ENCODE measurements at regions of chr9 and their contacts with region 1.

Region 1: DNA sequence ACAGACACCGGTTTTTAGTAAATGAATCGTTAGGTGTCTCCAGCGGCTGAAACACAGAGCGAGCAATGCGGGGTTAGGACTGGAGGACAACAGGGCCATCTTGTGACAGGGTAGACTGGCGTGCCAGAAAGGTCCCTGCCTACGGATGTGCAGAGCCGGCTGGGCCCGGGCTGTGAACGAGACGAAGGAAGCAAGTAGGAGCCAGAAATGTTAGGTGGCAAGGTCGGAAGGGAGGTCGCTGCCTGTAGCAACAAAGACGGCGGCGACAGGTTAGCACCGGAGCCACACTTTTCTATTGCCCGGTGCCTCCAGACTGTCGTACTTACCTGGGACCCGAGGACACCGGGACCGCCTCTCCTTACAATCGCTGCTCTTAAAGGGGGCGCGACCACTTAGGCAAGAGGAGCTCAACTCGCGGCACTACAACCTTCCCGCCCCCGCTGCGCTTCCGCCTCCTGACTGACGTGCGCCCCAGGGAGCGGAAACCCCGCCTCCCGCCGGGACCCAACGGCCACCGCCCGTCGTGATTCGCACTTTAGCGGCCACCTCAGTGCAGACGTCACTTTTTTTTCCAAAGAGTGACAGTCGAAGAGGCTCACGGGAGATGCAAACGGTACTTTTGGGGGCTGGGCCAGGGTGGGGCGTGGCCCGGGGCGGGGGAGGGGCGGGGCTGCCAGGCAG is at the start of gene INIP:
- DNase-seq: peak; percentile 95 to 96
- ATAC-seq: peak; percentile 98 to 100 (median 99)
- H3K4me3 ChIP-seq: peak within 1 kb of the TSS; percentile 52 to 97 (median 89)
- H3K27ac ChIP-seq: peak within 1 kb of the TSS; percentile 15 to 94 (median 90)
- H3K4me1 ChIP-seq: peaks cover 6 to 17% (median 11%) of the 10 kb centered on the region in 9 donors
- H3K27me3 ChIP-seq: no peaks in the 10 kb centered on the region
- CTCF ChIP-seq: peak in 3 of 9 donors; percentile 27 to 40 (median 38)
- total RNA-seq, gene INIP: 10.7 to 18.9 (median 13.0) TPM

Region 2: DNA sequence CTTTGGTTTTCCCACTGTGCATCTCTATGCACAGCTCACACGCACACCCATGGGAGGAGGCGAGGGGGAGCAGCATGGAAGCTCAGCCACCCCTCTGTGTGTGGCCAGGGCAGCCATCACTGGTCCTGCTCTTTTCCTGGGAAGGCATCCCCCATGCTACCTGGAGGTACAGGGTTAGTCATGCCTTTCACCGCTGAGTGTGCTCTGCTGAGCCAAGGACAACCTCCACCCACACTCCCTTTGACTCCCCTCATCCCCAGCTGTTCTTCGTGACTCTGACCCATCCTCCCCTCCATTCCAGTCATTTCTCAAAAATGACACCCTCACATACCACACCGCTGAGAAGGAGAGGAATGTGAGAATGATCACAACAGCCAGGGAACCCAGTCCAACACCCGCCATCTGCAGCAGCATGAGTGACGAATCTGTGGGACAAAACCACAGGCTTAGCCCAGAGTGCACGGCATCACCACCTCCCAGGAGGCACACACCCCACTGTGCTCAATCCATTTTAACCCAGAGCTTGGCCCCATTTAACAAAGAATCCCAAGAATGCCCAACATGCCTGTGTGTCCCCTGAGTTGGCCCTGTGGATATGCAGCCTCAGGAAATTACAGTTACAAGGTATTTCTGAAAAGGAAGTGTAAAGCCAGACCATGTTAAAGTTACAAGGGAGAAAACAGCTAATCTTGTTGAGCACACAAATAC is 676.1 kb before region 1 on chr9:
- intact Hi-C with region 1: no loop called
- DNase-seq: no peak
- ATAC-seq: peak in 7 of 8 donors; percentile 38 to 95 (median 83)
- H3K4me3 ChIP-seq: no peak overlapping the region
- H3K27ac ChIP-seq: peak overlapping the region in 3 of 10 donors; percentile 38 to 45 (median 43)
- H3K4me1 ChIP-seq: peaks cover 0 to 32% (median 0%) of the 10 kb centered on the region in 9 donors
- H3K27me3 ChIP-seq: no peaks in the 10 kb centered on the region
- CTCF ChIP-seq: no peak

Region 3: DNA sequence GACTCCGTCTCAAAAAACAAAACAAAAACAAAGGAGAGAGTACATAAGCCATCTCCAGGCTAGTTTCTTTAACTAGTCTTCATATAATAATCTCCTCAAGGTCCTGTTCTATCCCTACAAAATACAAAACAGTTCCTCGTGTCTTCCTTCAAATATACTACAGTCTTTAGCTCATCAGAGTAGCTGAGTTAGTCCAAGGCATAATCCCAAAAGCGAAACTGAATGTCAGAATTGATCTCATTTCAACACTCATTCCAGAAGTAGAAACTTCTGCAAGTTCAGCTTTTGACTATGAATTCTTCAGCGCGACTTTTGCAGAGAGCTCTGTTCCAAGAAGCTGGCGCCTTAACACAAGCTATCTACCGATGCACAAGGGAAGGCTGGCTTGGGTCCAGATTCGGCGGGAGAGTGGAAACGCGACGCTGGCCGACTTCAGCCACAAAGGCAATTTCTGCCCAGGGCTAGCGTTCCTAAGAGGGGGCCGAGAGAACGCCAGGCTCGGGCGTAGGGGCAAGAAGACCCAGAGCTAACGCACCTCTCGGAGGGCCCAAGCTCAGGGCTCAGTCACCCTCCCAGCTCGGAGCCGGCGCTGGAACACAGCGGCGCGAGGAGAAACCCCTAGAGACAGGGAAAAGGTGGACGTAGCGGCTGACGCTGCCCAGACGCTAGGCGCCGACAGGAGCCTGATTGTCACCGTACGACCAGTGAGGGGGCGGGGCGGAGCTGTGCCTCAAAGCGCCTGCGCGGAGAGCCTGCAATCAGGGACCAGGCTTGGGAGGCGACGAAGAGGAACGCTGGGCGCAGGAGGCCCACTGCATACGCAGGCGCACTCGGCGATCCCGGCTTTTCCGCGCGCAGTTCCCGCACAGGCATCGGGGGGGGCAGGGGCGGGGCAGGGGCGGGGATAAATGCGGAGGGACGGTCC is 338.4 kb before region 1 on chr9:
- intact Hi-C with region 1: loop called in 1 of 10 experiments (anchors 2 kb)
- DNase-seq: peak; percentile 100
- ATAC-seq: peak; percentile 95 to 99 (median 98)
- H3K4me3 ChIP-seq: peak overlapping the region; percentile 65 to 92 (median 80)
- H3K27ac ChIP-seq: peak overlapping the region; percentile 90 to 99 (median 97)
- H3K4me1 ChIP-seq: peaks cover 0 to 60% (median 51%) of the 10 kb centered on the region in 9 donors
- H3K27me3 ChIP-seq: no peaks in the 10 kb centered on the region
- CTCF ChIP-seq: peak in 2 of 9 donors; percentile 8 to 10

Region 4: DNA sequence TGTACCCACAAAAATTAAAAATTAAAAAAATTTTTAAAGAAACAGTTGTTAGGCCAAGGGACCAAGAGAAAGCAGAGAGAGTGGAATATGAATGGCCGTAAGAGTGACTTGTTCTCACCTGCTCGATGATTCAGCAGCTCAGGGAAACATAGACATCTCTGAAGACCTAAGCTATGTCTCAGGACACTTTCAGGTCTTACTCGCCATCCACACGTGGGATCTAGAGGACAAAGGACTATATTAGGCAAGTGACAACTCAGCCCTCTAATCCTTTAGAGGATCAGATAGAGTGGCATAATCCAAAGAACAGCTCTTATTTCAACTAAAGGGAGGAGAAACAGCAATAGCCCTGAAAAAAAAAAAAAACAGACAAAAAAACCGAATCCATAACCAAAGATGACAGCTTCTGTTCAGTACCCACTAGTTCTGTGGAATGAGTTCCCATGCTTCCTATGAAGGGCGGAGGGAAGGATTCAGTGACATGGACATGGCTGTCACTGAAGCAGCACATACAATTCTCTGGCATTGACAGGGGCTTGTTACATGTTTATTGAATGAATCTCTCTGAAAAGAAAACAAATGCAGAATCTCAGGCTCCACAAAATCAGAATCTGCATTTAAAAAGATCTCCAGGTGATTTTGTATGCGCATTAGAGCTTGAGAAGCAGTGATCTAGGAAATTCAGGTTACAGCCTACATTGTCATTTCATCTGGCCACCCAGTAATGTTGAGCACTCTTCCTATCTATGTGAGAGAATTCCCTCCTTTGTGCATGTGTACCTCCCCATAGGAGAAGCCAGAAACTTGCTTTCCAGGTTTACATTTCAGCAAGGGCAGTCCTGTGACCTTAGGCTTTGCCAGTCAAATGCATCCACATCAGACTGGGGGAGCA is 135.2 kb before region 1 on chr9:
- intact Hi-C with region 1: no loop called
- DNase-seq: no peak
- ATAC-seq: no peak
- H3K4me3 ChIP-seq: no peak overlapping the region
- H3K27ac ChIP-seq: no peak overlapping the region
- H3K4me1 ChIP-seq: no peaks in the 10 kb centered on the region
- H3K27me3 ChIP-seq: no peaks in the 10 kb centered on the region
- CTCF ChIP-seq: no peak

Region 5: GRCh38 chr9:112750111-112750767 is 32.4 kb after region 1 on chr9 and contains the start of gene SNX30:
- intact Hi-C with region 1: loop called in 4 of 10 experiments (anchors 1 to 2 kb)
- DNase-seq: peak; percentile 89 to 92
- ATAC-seq: peak; percentile 96 to 98 (median 98)
- H3K4me3 ChIP-seq: peak within 1 kb of the TSS; percentile 73 to 100 (median 96)
- H3K27ac ChIP-seq: peak within 1 kb of the TSS; percentile 68 to 95 (median 80)
- H3K4me1 ChIP-seq: peaks cover 15 to 58% (median 30%) of the 10 kb centered on the region in 9 donors
- H3K27me3 ChIP-seq: no peaks in the 10 kb centered on the region
- CTCF ChIP-seq: peak in 2 of 9 donors; percentile 35 to 38
- total RNA-seq, gene SNX30: 3.1 to 7.2 (median 4.0) TPM

Region 6: DNA sequence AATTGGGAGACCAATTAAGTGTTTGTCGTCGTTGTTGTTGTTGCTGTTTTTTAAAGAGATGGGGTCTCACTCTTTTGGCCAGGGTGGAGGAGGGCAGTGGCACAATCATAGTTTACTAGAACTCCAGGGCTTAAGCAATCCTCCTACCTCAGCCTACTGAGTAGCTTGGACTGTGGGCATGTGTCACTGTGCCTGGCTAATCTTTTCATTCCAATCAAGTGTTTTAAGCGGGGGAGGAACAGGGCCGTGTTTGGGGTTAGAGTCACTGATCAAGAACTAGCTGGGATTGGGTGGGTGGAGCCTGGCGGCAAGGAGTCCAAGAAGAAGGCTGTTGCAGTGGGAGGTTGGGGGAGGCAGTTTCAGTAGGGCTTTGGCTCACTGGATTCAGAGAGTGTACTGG is 46.5 kb after region 1 on chr9:
- intact Hi-C with region 1: no loop called
- DNase-seq: no peak
- ATAC-seq: peak in 1 of 8 donors; percentile 38
- H3K4me3 ChIP-seq: no peak overlapping the region
- H3K27ac ChIP-seq: no peak overlapping the region
- H3K4me1 ChIP-seq: peaks cover 0 to 17% (median 0%) of the 10 kb centered on the region in 9 donors
- H3K27me3 ChIP-seq: no peaks in the 10 kb centered on the region
- CTCF ChIP-seq: no peak

Region 7: DNA sequence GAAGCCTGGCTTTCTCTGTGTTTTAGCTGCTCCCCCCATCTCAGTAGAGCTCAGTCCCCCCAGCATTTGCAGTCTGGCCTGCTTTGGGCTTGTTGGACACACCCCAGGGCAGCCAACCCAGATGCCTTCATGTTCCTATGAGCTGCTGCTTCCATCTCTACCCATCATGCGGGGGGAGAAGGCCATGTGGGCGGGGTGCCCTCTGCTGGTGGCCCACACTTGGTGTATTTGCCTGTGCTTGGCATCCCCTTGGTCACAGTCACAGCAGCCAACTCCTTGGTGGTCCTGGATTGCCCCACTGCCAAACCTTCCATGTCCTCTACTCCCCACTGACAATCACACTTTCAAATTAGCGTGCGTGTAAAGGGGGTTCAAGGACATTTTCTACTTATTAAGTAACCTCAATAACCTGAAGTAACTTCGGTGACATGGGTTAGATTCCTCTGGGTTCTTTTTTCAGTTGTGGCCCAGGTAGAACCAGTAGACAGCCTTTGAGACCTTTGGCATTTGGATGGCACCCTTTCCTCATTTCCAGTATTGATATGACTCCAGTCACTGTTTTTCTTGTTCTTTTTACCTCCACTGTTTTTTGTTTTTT is 75.5 kb after region 1 on chr9:
- intact Hi-C with region 1: loop called in 1 of 10 experiments (anchors 5 kb)
- DNase-seq: peak; percentile 36 to 71
- ATAC-seq: peak; percentile 59 to 88 (median 74)
- H3K4me3 ChIP-seq: no peak overlapping the region
- H3K27ac ChIP-seq: no peak overlapping the region
- H3K4me1 ChIP-seq: peaks cover 0 to 18% (median 7%) of the 10 kb centered on the region in 9 donors
- H3K27me3 ChIP-seq: no peaks in the 10 kb centered on the region
- CTCF ChIP-seq: peak in 8 of 9 donors; percentile 25 to 78 (median 62)

Region 8: GRCh38 chr9:112819635-112820496 is 102.1 kb after region 1 on chr9:
- intact Hi-C with region 1: loop called in 3 of 10 experiments (anchors 5 to 10 kb)
- DNase-seq: peak; percentile 38 to 68
- ATAC-seq: peak; percentile 91 to 99 (median 96)
- H3K4me3 ChIP-seq: no peak overlapping the region
- H3K27ac ChIP-seq: peak overlapping the region in 2 of 10 donors; percentile 15 to 42
- H3K4me1 ChIP-seq: peaks cover 0 to 21% (median 11%) of the 10 kb centered on the region in 9 donors
- H3K27me3 ChIP-seq: no peaks in the 10 kb centered on the region
- CTCF ChIP-seq: peak; percentile 40 to 82 (median 72)